Endothelial cell of umbilical vein (primary cell): ENCODE measurements at regions of chr2 and their contacts with region 1.

Region 1: DNA sequence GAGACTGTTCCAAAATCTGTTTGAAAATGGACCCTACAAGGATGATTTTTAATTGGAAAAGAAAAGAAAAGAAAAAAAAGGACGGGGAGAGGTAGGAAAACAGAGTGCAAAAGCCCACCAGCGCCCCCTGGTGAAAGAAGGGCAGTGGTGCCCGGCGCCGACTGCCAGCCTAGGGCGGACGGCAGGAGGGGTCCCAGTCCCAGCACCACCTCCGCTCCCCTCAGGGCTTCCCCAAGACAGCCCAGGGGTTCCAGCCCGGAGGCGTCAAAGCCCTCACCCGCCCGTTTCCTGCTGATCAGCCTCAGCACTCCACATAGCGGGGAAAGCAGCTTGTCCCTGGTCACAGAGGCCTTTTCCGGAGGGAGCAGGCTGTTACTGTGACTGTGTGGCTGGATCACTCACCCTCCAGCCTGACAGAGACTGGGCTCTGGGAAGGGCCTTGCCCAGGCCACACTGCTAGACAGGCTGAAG is 213.9 kb downstream of the TFCP2L1 start:
- DNase-seq: peak; percentile 34
- H3K4me3 ChIP-seq: no peak overlapping the region
- H3K27ac ChIP-seq: no peak overlapping the region
- H3K4me1 ChIP-seq: peaks cover 4% of the 10 kb centered on the region
- H3K27me3 ChIP-seq: peaks cover 1 to 4% of the 10 kb centered on the region in 2 experiments
- CTCF ChIP-seq: peak; percentile 89 to 95
- POLR2A ChIP-seq: no peak

Region 2: GRCh38 chr2:120703330-120703994 is 367.6 kb before region 1 on chr2:
- CTCF ChIA-PET with region 1: interaction called, 251 read pairs
- POLR2A ChIA-PET with region 1: no interaction called
- dilution Hi-C with region 1: loop called (anchors 10 kb)
- intact Hi-C with region 1: no loop called
- DNase-seq: peak; percentile 61
- H3K4me3 ChIP-seq: no peak overlapping the region
- H3K27ac ChIP-seq: no peak overlapping the region
- H3K4me1 ChIP-seq: peaks cover 4% of the 10 kb centered on the region
- H3K27me3 ChIP-seq: peaks cover 2 to 5% of the 10 kb centered on the region in 2 experiments
- CTCF ChIP-seq: no peak
- POLR2A ChIP-seq: no peak

Region 3: GRCh38 chr2:120735746-120736170 is 335.3 kb before region 1 on chr2 and contains the start of gene GLI2:
- CTCF ChIA-PET with region 1: interaction called, 5 read pairs
- POLR2A ChIA-PET with region 1: no interaction called
- dilution Hi-C with region 1: no loop called
- intact Hi-C with region 1: loop called (anchors 1 kb)
- DNase-seq: peak; percentile 63
- H3K4me3 ChIP-seq: peak within 1 kb of the TSS in 1 of 3 experiments; percentile 8
- H3K27ac ChIP-seq: no peak within 1 kb of the TSS
- H3K4me1 ChIP-seq: no peaks in the 10 kb centered on the region
- H3K27me3 ChIP-seq: peaks cover 63 to 83% of the 10 kb centered on the region in 2 experiments
- CTCF ChIP-seq: peak; percentile 56 to 64
- POLR2A ChIP-seq: no peak
- total RNA-seq, gene GLI2: 0.13 and 0.51 TPM in 2 replicates

Region 4: DNA sequence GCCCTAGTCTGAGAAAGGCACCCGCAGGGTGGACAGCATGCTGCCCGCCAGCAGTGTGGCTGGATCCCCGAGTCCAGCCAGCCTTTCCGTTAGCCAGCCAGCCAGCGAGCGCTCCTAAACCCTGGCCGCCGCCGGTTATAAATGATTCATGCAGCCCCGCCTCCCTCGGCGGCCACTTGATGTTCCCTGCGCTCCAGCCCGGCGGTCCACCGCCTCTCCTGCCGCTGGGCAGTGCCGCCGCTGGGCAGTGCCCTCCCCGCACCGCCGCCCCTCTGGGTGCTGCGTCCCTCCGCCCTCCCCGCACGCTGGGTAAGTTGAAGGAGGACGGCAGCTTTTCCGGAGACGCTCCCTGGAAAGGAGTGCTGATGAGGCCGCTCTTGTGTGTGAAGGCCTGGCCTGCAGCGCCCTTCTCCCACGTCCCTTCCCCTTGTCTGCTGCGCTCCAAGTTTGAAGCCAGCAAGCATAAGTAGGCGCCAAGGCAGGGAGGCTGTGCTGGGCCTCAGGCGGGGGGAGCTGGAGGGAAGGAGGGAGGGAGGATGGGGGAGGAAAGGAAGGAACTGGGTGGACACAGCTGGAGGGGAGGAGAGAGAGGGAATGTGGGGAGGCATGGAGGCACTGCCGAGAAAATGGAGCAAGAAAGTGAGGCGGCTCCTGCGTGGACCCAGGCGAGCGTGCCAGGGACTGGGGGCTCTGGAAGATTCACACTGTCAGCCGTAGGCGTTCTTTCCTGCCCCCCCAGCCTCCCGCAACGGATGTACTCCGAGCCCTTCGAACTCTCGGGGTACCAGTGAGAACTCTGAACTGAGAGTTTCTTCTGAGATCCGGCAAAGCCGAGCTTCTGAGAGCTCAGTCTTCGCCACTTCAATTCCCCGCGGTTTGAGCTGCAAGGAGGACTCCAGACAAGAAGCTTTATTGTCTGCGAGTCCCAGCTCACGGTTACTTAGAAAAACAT is 203.5 kb before region 1 on chr2:
- CTCF ChIA-PET with region 1: no interaction called
- POLR2A ChIA-PET with region 1: no interaction called
- dilution Hi-C with region 1: no loop called
- intact Hi-C with region 1: loop called (anchors 5 kb)
- DNase-seq: peak; percentile 60
- H3K4me3 ChIP-seq: no peak overlapping the region
- H3K27ac ChIP-seq: no peak overlapping the region
- H3K4me1 ChIP-seq: peaks cover 5% of the 10 kb centered on the region
- H3K27me3 ChIP-seq: peaks cover 4 to 10% of the 10 kb centered on the region in 2 experiments
- CTCF ChIP-seq: no peak
- POLR2A ChIP-seq: no peak

Region 5: DNA sequence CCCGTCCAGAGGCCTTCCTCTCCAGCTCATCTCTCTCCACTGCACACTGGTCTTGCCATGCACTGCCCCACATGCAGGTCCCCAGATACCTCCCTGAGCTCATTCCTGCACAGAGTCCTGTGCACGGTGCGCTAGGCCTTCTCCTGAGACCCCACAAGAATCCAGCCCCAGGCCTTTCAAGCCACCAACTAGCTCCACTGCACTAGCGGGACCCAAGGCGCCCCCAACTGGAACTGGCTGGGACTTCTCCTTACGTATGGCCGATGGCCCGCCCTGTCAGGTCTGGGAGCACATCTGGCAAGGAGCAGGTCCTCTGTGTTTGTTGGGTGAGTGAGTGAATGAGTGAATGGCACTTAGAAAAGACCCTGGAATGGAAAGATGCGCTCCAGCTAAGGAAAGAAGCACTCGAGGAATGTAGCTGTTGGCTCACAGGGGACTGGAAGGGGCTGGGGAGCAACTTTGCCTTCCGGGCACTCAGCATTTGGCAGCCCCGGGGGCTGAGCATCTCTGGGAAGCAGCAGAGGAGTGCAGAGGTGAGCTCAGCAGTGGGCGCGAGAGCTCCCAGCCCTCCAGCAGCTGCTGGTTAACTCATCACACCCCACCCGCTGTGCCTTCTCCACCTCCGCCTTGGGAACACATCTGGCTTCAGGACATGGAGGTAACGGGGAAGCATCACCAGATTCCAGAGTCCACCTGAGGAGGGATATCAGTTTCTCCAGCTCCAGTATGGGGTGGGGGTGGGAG is 112.3 kb before region 1 on chr2:
- CTCF ChIA-PET with region 1: interaction called, 3 read pairs
- POLR2A ChIA-PET with region 1: interaction called, 3 read pairs
- dilution Hi-C with region 1: no loop called
- intact Hi-C with region 1: loop called (anchors 5 kb)
- DNase-seq: no peak
- H3K4me3 ChIP-seq: no peak overlapping the region
- H3K27ac ChIP-seq: no peak overlapping the region
- H3K4me1 ChIP-seq: no peaks in the 10 kb centered on the region
- H3K27me3 ChIP-seq: no peaks in the 10 kb centered on the region
- CTCF ChIP-seq: peak in 1 of 2 donors; percentile 25
- POLR2A ChIP-seq: no peak

Region 6: DNA sequence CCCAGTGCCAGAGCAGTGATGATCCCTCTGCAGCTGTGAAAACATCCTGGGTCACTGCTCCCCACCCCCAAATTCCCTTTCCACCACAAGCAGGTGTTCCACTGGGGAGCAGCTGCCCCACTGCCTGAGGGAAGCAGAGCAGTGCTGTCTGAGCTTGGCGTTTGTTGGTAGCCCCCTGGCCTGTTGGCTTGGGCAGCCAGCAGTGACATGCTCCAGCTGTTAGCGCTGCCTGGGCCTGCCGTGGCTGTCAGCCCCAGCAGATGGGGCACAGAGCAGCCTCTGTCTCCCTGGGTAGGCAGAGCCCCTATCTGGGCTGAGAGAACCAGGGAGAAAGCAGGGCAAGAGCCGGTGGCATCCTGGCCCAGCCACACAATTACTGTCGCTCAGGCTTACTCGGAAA is 87.7 kb before region 1 on chr2:
- CTCF ChIA-PET with region 1: no interaction called
- POLR2A ChIA-PET with region 1: no interaction called
- dilution Hi-C with region 1: no loop called
- intact Hi-C with region 1: no loop called
- DNase-seq: no peak
- H3K4me3 ChIP-seq: no peak overlapping the region
- H3K27ac ChIP-seq: no peak overlapping the region
- H3K4me1 ChIP-seq: no peaks in the 10 kb centered on the region
- H3K27me3 ChIP-seq: peaks cover 0 to 4% of the 10 kb centered on the region in 2 experiments
- CTCF ChIP-seq: no peak
- POLR2A ChIP-seq: no peak

Region 7: GRCh38 chr2:121055501-121055900 is 15.6 kb before region 1 on chr2:
- CTCF ChIA-PET with region 1: interaction called, 5 read pairs
- POLR2A ChIA-PET with region 1: no interaction called
- dilution Hi-C with region 1: no loop called
- intact Hi-C with region 1: loop called (anchors 1 kb)
- DNase-seq: no peak
- H3K4me3 ChIP-seq: no peak overlapping the region
- H3K27ac ChIP-seq: no peak overlapping the region
- H3K4me1 ChIP-seq: no peaks in the 10 kb centered on the region
- H3K27me3 ChIP-seq: peaks cover 0 to 4% of the 10 kb centered on the region in 2 experiments
- CTCF ChIP-seq: no peak
- POLR2A ChIP-seq: no peak

Region 8: DNA sequence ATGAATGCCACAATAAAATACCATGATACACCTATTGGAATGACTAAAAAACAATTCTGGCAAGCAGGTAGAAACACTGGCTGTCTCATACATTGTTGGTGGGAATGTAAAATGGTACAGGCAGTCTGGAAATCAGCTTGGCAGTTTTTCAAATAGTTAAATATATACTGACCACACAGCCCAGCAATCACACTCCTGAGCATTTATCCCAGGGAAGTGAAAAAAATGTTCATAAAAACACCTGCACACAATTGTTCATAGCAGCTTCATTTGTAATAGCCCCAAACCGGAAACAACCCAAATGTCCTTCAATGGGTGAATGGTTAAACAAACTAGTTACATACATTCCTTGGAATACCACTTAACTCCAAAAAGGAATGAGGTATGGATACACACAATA is 76.7 kb after region 1 on chr2:
- CTCF ChIA-PET with region 1: no interaction called
- POLR2A ChIA-PET with region 1: no interaction called
- dilution Hi-C with region 1: no loop called
- intact Hi-C with region 1: no loop called
- DNase-seq: no peak
- H3K4me3 ChIP-seq: no peak overlapping the region
- H3K27ac ChIP-seq: no peak overlapping the region
- H3K4me1 ChIP-seq: no peaks in the 10 kb centered on the region
- H3K27me3 ChIP-seq: no peaks in the 10 kb centered on the region
- CTCF ChIP-seq: no peak
- POLR2A ChIP-seq: no peak

Region 9: GRCh38 chr2:121664086-121664485 is 593.0 kb after region 1 on chr2:
- CTCF ChIA-PET with region 1: no interaction called
- POLR2A ChIA-PET with region 1: no interaction called
- dilution Hi-C with region 1: no loop called
- intact Hi-C with region 1: no loop called
- DNase-seq: no peak
- H3K4me3 ChIP-seq: no peak overlapping the region
- H3K27ac ChIP-seq: no peak overlapping the region
- H3K4me1 ChIP-seq: no peaks in the 10 kb centered on the region
- H3K27me3 ChIP-seq: no peaks in the 10 kb centered on the region
- CTCF ChIP-seq: no peak
- POLR2A ChIP-seq: no peak